Ascending aorta (tissue), 2 donors: ENCODE measurements at regions of chr1 and their contacts with region 1.

Region 1: DNA sequence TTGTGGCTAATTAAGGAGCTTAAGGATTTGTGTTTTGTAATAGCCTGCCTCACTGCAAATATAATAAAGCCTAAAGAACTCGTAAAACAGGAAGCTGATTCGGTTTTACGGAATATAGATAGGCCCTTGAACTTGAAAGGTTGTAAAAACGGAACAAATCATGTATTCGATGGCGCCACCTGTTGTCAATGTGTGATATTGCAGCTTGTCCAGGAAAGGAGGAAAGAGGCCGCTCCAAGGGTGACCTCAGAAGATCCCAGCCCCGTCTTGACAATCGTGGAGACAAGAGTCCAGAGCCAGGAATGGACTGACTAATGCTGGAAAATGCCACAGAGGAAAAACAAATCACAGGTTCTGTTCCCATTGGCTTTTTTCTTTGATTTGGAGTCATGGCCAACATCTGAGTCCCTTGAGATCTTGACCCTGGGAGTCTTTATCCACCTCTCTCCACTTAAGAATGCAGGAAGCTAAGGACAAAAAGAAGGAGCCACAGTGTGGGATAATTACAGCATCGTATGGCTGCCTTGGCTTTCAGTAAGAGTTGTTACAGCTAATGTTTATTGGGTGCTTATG is 7.0 kb upstream of the IGSF21 start:
- DNase-seq: peak in 1 of 2 donors; percentile 88
- H3K4me3 ChIP-seq: no peak overlapping the region
- H3K27ac ChIP-seq: no peak overlapping the region
- H3K4me1 ChIP-seq: no peaks in the 10 kb centered on the region
- H3K27me3 ChIP-seq: no peaks in the 10 kb centered on the region
- CTCF ChIP-seq: peak; percentile 65 to 88 (median 82)

Region 2: DNA sequence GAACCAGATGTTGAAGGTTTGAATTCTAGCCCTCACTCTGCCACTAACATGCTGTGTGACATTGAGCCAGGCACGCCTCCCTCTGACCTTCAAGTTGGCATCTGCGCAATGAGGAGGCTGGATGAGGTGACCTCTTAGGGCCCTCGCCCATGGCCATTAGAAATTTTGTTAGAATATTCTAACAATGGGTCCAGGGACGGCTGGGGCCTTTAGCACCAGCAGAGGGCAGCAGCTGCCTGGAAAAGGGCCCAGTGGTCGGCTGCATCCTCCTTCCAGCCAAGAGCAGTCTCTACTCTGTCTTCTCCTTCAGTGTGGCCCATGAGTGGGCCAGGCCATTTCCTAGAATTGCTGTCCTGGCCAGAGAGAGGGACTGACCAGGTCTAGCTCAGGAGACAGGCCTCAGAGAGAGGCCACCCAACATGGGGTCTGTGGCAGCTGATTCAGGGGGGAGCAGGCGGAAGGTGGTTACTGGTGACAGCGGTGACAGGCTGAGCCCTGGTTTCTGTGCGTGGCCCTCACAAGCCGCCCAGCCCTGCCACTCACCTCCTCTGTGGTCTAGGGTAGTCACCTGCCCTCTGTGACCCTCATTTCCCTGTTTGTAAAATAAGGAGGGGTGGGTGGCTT is 446.7 kb before region 1 on chr1:
- intact Hi-C with region 1: loop called (anchors 10 kb)
- DNase-seq: no peak
- H3K4me3 ChIP-seq: no peak overlapping the region
- H3K27ac ChIP-seq: peak overlapping the region; percentile 86 to 94
- H3K4me1 ChIP-seq: peaks cover 3 to 13% of the 10 kb centered on the region in 2 donors
- H3K27me3 ChIP-seq: no peaks in the 10 kb centered on the region
- CTCF ChIP-seq: peak; percentile 21 to 62 (median 52)

Region 3: GRCh38 chr1:18037651-18038441 is 62.7 kb before region 1 on chr1:
- intact Hi-C with region 1: no loop called
- DNase-seq: no peak
- H3K4me3 ChIP-seq: no peak overlapping the region
- H3K27ac ChIP-seq: no peak overlapping the region
- H3K4me1 ChIP-seq: no peaks in the 10 kb centered on the region
- H3K27me3 ChIP-seq: no peaks in the 10 kb centered on the region
- CTCF ChIP-seq: no peak